ENCODE measurements at regions of chr11 and their contacts with region 1.

Region 1: GRCh38 chr11:133927690-133928627 is 28.8 kb downstream of the IGSF9B start:
- DNase-seq: peak; percentile 43 to 72 (median 70)
- ATAC-seq: peak; percentile 85
- H3K4me3 ChIP-seq: peak overlapping the region; percentile 47
- H3K4me3 Mint-ChIP-seq: peak overlapping the region; percentile 84 to 93 (median 88)
- H3K27ac ChIP-seq: peak overlapping the region; percentile 4
- H3K27ac Mint-ChIP-seq: peak overlapping the region; percentile 33 to 95 (median 81)
- H3K4me1 ChIP-seq: peaks cover 18% of the 10 kb centered on the region in 2 donors
- H3K4me1 Mint-ChIP-seq: peaks cover 16 to 37% (median 23%) of the 10 kb centered on the region in 7 donors
- H3K27me3 ChIP-seq: no peaks in the 10 kb centered on the region
- H3K27me3 Mint-ChIP-seq: no peaks in the 10 kb centered on the region

Region 2: DNA sequence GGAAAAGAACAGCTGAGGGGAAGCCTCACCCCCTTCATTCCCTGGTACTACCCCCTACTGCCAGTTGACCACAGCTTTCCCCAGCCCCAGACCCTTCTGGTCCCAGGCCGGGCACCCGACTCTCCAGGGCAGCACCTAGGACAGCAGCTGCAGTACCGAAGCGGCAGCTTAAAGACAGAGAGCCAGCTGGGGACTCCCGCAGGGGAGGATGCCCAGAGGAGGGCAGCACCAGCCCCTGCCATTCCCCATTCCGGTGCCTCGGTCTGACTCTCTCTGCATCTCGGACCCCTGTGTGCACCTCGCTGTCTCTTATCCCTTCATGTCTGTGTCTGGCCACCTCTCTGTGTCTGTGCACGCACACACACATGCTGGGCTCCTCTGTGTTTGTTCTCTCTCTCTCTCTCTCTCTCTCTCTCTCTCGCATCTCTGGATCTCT is 19.4 kb after region 1 on chr11:
- CTCF ChIA-PET with region 1: interaction called, 29 read pairs
- POLR2A ChIA-PET with region 1: interaction called, 20 read pairs
- intact Hi-C with region 1: loop called (anchors 1 kb)
- DNase-seq: peak; percentile 49 to 76 (median 74)
- ATAC-seq: peak; percentile 66
- H3K4me3 ChIP-seq: peak overlapping the region; percentile 39
- H3K4me3 Mint-ChIP-seq: peak overlapping the region; percentile 50 to 97 (median 76)
- H3K27ac ChIP-seq: peak overlapping the region; percentile 44
- H3K27ac Mint-ChIP-seq: peak overlapping the region; percentile 60 to 94 (median 85)
- H3K4me1 ChIP-seq: peaks cover 50 to 60% of the 10 kb centered on the region in 2 donors
- H3K4me1 Mint-ChIP-seq: peaks cover 41 to 76% (median 64%) of the 10 kb centered on the region in 7 donors
- H3K27me3 ChIP-seq: no peaks in the 10 kb centered on the region
- H3K27me3 Mint-ChIP-seq: no peaks in the 10 kb centered on the region

Region 3: GRCh38 chr11:133966921-133967598 is 39.1 kb after region 1 on chr11:
- CTCF ChIA-PET with region 1: interaction called, 4 read pairs
- POLR2A ChIA-PET with region 1: no interaction called
- intact Hi-C with region 1: loop called (anchors 1 kb)
- DNase-seq: peak; percentile 49 to 71 (median 61)
- ATAC-seq: peak; percentile 77
- H3K4me3 ChIP-seq: peak overlapping the region; percentile 59
- H3K4me3 Mint-ChIP-seq: peak overlapping the region; percentile 81 to 93 (median 88)
- H3K27ac ChIP-seq: peak overlapping the region; percentile 36
- H3K27ac Mint-ChIP-seq: peak overlapping the region in 8 of 9 donors; percentile 20 to 93 (median 78)
- H3K4me1 ChIP-seq: no peaks in the 10 kb centered on the region
- H3K4me1 Mint-ChIP-seq: peaks cover 5 to 18% (median 13%) of the 10 kb centered on the region in 7 donors
- H3K27me3 ChIP-seq: no peaks in the 10 kb centered on the region
- H3K27me3 Mint-ChIP-seq: peaks cover 0 to 51% (median 5%) of the 10 kb centered on the region in 5 donors

Region 4: GRCh38 chr11:133978794-133979193 is 50.8 kb after region 1 on chr11:
- CTCF ChIA-PET with region 1: no interaction called
- POLR2A ChIA-PET with region 1: no interaction called
- intact Hi-C with region 1: no loop called
- DNase-seq: no peak
- ATAC-seq: no peak
- H3K4me3 ChIP-seq: no peak overlapping the region
- H3K4me3 Mint-ChIP-seq: no peak overlapping the region
- H3K27ac ChIP-seq: no peak overlapping the region
- H3K27ac Mint-ChIP-seq: no peak overlapping the region
- H3K4me1 ChIP-seq: no peaks in the 10 kb centered on the region
- H3K4me1 Mint-ChIP-seq: peaks cover 0 to 4% (median 0%) of the 10 kb centered on the region in 7 donors
- H3K27me3 ChIP-seq: no peaks in the 10 kb centered on the region
- H3K27me3 Mint-ChIP-seq: peaks cover 0 to 22% (median 11%) of the 10 kb centered on the region in 5 donors

Region 5: GRCh38 chr11:134033696-134034491 is 105.9 kb after region 1 on chr11:
- CTCF ChIA-PET with region 1: interaction called, 16 read pairs
- POLR2A ChIA-PET with region 1: interaction called, 3 read pairs
- intact Hi-C with region 1: loop called in 1 of 2 experiments (anchors 2 kb)
- DNase-seq: peak in 8 of 9 donors; percentile 38 to 74 (median 60)
- ATAC-seq: peak; percentile 77
- H3K4me3 ChIP-seq: peak overlapping the region; percentile 25
- H3K4me3 Mint-ChIP-seq: peak overlapping the region; percentile 63 to 95 (median 75)
- H3K27ac ChIP-seq: peak overlapping the region; percentile 67
- H3K27ac Mint-ChIP-seq: peak overlapping the region; percentile 74 to 98 (median 85)
- H3K4me1 ChIP-seq: peaks cover 29 to 46% of the 10 kb centered on the region in 2 donors
- H3K4me1 Mint-ChIP-seq: peaks cover 33 to 79% (median 65%) of the 10 kb centered on the region in 7 donors
- H3K27me3 ChIP-seq: no peaks in the 10 kb centered on the region
- H3K27me3 Mint-ChIP-seq: peaks cover 0 to 24% (median 0%) of the 10 kb centered on the region in 5 donors

Region 6: DNA sequence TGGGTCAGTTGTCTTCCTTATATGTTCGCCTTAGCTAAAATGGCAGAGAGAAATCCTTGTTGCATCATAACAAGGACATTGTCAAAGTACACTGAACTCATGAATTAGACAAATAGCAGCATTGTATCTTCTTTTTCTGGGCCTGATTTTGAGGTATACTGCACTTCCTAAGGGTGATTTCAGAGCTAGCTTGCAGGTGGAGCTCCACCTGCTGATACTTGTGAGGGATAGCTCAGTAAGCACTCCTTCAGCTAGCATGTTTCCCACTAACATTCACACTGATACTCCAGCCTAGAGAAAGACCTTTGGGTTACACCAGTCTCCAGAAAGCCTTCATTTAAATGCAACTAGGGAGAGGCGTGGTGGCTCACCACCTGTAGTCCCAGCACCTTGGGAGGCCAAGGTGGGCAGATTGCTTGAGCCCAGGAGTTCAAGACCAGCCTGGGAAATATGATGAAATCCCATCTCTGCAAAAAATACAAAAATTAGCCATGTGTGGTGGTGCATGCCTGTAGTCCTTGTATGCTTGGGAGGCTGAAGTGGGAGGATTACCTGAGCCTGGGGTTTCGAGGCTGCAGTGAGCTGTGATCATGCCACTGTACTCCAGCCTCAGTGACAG is 170.7 kb after region 1 on chr11:
- CTCF ChIA-PET with region 1: interaction called, 11 read pairs
- POLR2A ChIA-PET with region 1: no interaction called
- intact Hi-C with region 1: loop called (anchors 1 kb)
- DNase-seq: peak in 4 of 9 donors; percentile 4 to 15 (median 8)
- ATAC-seq: no peak
- H3K4me3 ChIP-seq: no peak overlapping the region
- H3K4me3 Mint-ChIP-seq: no peak overlapping the region
- H3K27ac ChIP-seq: no peak overlapping the region
- H3K27ac Mint-ChIP-seq: no peak overlapping the region
- H3K4me1 ChIP-seq: no peaks in the 10 kb centered on the region
- H3K4me1 Mint-ChIP-seq: peaks cover 0 to 8% (median 0%) of the 10 kb centered on the region in 7 donors
- H3K27me3 ChIP-seq: no peaks in the 10 kb centered on the region
- H3K27me3 Mint-ChIP-seq: peaks cover 0 to 11% (median 0%) of the 10 kb centered on the region in 5 donors

Region 7: DNA sequence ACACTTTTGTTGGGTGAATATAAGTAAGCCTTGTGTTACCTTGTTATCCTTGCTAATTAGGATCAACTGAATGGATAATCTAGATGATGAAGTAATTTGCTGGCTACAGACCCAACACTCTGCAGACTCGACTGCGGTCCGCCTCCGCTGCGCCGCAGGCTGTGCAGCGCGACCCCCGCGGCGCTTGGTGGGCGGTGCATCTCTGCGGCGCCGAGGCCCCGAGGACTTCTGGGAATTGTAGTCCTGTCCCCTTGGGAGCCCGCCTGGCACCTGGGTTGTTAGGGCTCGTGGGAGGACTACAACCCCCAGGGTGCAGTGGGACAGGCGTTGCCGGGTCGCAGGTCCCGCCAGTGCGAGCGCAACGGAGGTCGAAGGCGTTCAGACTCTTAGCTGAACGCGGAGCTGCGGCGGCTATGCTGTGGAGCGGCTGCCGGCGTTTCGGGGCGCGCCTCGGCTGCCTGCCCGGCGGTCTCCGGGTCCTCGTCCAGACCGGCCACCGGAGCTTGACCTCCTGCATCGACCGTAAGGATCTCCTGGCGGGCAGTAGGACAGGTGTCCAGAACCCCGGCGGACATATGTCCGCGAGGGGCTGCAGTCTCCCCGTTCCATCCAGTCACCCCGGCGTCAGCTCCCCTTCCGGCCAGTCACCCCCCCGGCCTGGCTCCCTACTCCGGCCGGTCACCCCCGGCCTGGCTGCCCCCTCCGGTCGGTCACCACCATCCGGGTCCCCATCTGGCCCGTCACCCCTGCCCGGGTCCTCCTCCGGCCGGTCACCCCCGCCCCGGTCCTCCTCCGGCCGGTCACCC is 325.4 kb after region 1 on chr11 and contains the starts of genes ACAD8 and THYN1:
- CTCF ChIA-PET with region 1: no interaction called
- POLR2A ChIA-PET with region 1: no interaction called
- intact Hi-C with region 1: loop called in 1 of 2 experiments (anchors 1 kb)
- DNase-seq: peak; percentile 82 to 98 (median 95)
- ATAC-seq: peak; percentile 100
- H3K4me3 ChIP-seq: peak within 1 kb of the TSS; percentile 89
- H3K4me3 Mint-ChIP-seq: peak within 1 kb of the TSS; percentile 79 to 99 (median 94)
- H3K27ac ChIP-seq: peak within 1 kb of the TSS; percentile 73
- H3K27ac Mint-ChIP-seq: peak within 1 kb of the TSS; percentile 75 to 92 (median 88)
- H3K4me1 ChIP-seq: peaks cover 16 to 18% of the 10 kb centered on the region in 2 donors
- H3K4me1 Mint-ChIP-seq: peaks cover 24 to 47% (median 40%) of the 10 kb centered on the region in 7 donors
- H3K27me3 ChIP-seq: no peaks in the 10 kb centered on the region
- H3K27me3 Mint-ChIP-seq: no peaks in the 10 kb centered on the region
- total RNA-seq, gene ACAD8: 18.5 to 40.2 (median 26.1) TPM
- total RNA-seq, gene THYN1: 34.4 to 67.7 (median 62.5) TPM